CD8-positive, alpha-beta T cell (primary cell): ENCODE measurements at regions of chr4 and their contacts with region 1.

Region 1: GRCh38 chr4:83217721-83218522 is 66.7 kb downstream of the COQ2 start:
- DNase-seq: peak; percentile 35 to 94 (median 67)
- ATAC-seq: peak; percentile 93
- H3K4me3 ChIP-seq: no peak overlapping the region
- H3K4me3 Mint-ChIP-seq: peak overlapping the region; percentile 55
- H3K27ac ChIP-seq: peak overlapping the region; percentile 68 to 81
- H3K27ac Mint-ChIP-seq: peak overlapping the region; percentile 89
- H3K4me1 ChIP-seq: peaks cover 66% of the 10 kb centered on the region
- H3K4me1 Mint-ChIP-seq: peaks cover 74% of the 10 kb centered on the region
- H3K27me3 ChIP-seq: no peaks in the 10 kb centered on the region
- H3K27me3 Mint-ChIP-seq: no peaks in the 10 kb centered on the region
- CTCF ChIP-seq: no peak

Region 2: GRCh38 chr4:82900331-82901128 is 317.4 kb before region 1 on chr4 and contains the start of gene THAP9:
- CTCF ChIA-PET with region 1: no interaction called
- POLR2A ChIA-PET with region 1: interaction called, 4 read pairs
- intact Hi-C with region 1: loop called in 1 of 2 experiments (anchors 5 kb)
- DNase-seq: peak; percentile 95 to 100 (median 97)
- ATAC-seq: peak; percentile 88
- H3K4me3 ChIP-seq: peak within 1 kb of the TSS; percentile 73 to 84
- H3K4me3 Mint-ChIP-seq: no peak within 1 kb of the TSS
- H3K27ac ChIP-seq: peak within 1 kb of the TSS; percentile 93 to 99
- H3K27ac Mint-ChIP-seq: no peak within 1 kb of the TSS
- H3K4me1 ChIP-seq: peaks cover 30% of the 10 kb centered on the region
- H3K4me1 Mint-ChIP-seq: peaks cover 21% of the 10 kb centered on the region
- H3K27me3 ChIP-seq: no peaks in the 10 kb centered on the region
- H3K27me3 Mint-ChIP-seq: no peaks in the 10 kb centered on the region
- CTCF ChIP-seq: no peak
- total RNA-seq, gene THAP9: 5.2 to 7.3 TPM

Region 3: DNA sequence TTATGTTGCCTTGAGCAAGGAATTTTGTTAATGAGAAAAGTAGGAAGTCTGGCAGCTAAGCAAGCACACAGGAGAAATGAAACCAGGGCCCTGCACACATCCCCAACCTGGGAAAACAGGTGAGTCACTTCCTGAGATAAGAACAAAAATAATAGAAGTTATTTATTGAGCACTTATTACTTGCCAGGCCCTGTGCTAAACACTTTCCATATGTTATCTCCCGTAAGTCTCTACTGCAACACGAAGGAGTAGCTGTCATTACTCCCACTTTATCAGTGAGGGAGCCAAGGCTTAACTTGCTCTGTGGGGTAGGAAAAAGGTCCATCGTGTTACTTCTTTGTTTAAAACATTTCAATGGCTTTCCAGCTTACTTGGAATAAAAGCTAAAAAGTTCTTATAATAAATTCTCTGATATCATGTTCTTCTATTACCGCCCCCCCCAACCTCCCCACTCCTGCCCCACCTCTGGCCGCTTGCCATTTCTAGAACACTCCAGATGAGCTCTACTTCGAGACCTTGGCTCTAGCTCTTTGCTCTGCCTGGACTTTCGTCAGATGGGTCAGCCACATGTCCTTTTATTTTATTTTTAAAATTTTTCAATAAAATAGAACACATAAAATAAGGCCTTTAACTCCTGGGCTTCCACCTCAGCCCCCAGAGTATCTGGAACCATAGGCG is 67.1 kb before region 1 on chr4:
- CTCF ChIA-PET with region 1: interaction called, 3 read pairs
- POLR2A ChIA-PET with region 1: interaction called, 3 read pairs
- intact Hi-C with region 1: loop called in 1 of 2 experiments (anchors 2 kb)
- DNase-seq: no peak
- ATAC-seq: no peak
- H3K4me3 ChIP-seq: no peak overlapping the region
- H3K4me3 Mint-ChIP-seq: no peak overlapping the region
- H3K27ac ChIP-seq: no peak overlapping the region
- H3K27ac Mint-ChIP-seq: no peak overlapping the region
- H3K4me1 ChIP-seq: peaks cover 10% of the 10 kb centered on the region
- H3K4me1 Mint-ChIP-seq: peaks cover 30% of the 10 kb centered on the region
- H3K27me3 ChIP-seq: no peaks in the 10 kb centered on the region
- H3K27me3 Mint-ChIP-seq: no peaks in the 10 kb centered on the region
- CTCF ChIP-seq: no peak

Region 4: DNA sequence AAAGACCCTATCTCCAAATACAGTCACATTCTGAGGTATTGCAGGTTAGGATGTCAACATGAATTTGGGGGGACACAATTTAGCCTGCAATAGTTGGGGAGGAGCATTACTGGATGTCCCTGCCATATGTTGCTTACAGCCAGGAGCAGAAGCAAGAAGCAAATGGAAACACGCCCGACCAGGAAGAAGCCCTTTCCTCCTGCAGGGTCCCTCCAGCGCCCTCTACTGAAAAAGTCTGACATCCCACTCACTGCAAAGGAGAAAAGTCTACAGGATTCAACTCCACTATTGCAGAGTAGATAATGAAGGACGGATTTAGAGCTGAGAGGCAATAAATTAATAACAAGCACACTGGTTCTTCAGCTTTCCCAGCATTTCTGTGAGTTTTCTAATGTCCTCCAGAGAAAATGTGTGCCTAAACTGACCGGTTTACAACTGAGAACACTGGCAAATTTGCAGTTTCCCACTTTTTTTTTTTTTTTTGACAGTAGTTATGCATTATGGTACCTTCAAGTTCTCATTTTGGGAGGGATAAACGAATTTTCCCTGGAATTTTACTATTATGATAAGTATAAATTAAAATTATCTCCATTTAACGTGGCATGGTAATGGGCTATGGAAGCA is 35.0 kb after region 1 on chr4:
- CTCF ChIA-PET with region 1: interaction called, 23 read pairs
- POLR2A ChIA-PET with region 1: interaction called, 5 read pairs
- intact Hi-C with region 1: loop called (anchors 2 kb)
- DNase-seq: peak; percentile 51 to 88 (median 74)
- ATAC-seq: peak; percentile 93
- H3K4me3 ChIP-seq: no peak overlapping the region
- H3K4me3 Mint-ChIP-seq: no peak overlapping the region
- H3K27ac ChIP-seq: no peak overlapping the region
- H3K27ac Mint-ChIP-seq: peak overlapping the region; percentile 53
- H3K4me1 ChIP-seq: peaks cover 13% of the 10 kb centered on the region
- H3K4me1 Mint-ChIP-seq: peaks cover 24% of the 10 kb centered on the region
- H3K27me3 ChIP-seq: no peaks in the 10 kb centered on the region
- H3K27me3 Mint-ChIP-seq: no peaks in the 10 kb centered on the region
- CTCF ChIP-seq: peak; percentile 88